CD14-positive monocyte (primary cell): ENCODE measurements at regions of chr19 and their contacts with region 1.

Region 1: DNA sequence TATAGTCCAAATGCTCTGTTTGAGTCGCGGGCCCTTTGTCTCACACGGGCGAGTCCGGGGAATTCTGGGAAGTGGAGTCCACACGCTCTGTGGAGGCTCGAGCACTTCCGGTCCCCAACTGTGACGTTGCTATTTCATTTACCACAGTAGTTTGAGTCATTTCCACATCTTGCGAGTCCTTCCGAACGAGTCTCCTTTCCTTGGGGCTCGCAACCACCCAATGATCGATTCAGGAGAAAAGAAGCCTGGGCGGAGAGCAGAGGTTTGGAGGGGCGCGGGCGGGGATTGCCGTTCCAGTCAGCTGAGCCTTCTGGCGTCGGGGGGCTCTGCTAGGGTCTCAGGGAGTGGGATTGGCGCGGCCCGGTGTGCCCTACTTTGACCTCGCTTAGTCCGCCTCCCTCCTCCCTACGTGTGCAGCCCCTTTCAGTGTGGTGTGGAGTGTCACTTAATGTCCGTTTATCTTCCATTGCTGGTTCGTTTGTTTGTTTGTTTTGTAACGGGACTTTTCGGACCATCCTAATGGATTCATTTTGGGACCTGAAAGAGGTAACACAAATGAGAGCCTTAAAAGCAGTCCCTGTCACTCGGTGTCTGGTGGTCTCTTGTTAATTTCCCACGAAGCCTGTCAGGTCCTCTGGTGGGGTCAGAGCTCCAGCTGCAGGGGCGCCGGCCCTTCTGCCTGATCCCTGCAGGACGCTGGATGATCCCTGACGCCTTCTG is at the start of gene ZNF222:
- DNase-seq: peak; percentile 81 to 91 (median 88)
- H3K4me3 ChIP-seq: peak within 1 kb of the TSS; percentile 77 to 98 (median 78)
- H3K4me3 Mint-ChIP-seq: peak within 1 kb of the TSS; percentile 97 to 98
- H3K27ac ChIP-seq: peak within 1 kb of the TSS; percentile 34 to 88
- H3K27ac Mint-ChIP-seq: peak within 1 kb of the TSS; percentile 80 to 94 (median 85)
- H3K4me1 ChIP-seq: peaks cover 13 to 15% of the 10 kb centered on the region in 2 donors
- H3K4me1 Mint-ChIP-seq: peaks cover 17% of the 10 kb centered on the region
- H3K27me3 ChIP-seq: no peaks in the 10 kb centered on the region
- H3K27me3 Mint-ChIP-seq: peaks cover 1 to 4% (median 2%) of the 10 kb centered on the region in 3 donors
- CTCF ChIP-seq: no peak
- polyA plus RNA-seq, gene ZNF222: 1.0 to 1.5 (median 1.1) TPM

Region 2: GRCh38 chr19:44002566-44003460 is 22.6 kb before region 1 on chr19 and contains the start of gene ZNF230:
- intact Hi-C with region 1: loop called in 1 of 2 experiments (anchors 2 kb)
- DNase-seq: peak; percentile 92 to 97 (median 95)
- H3K4me3 ChIP-seq: peak within 1 kb of the TSS; percentile 82 to 98 (median 92)
- H3K4me3 Mint-ChIP-seq: peak within 1 kb of the TSS; percentile 96 to 99
- H3K27ac ChIP-seq: peak within 1 kb of the TSS; percentile 83 to 86
- H3K27ac Mint-ChIP-seq: peak within 1 kb of the TSS; percentile 93 to 99 (median 96)
- H3K4me1 ChIP-seq: peaks cover 31 to 34% of the 10 kb centered on the region in 2 donors
- H3K4me1 Mint-ChIP-seq: peaks cover 31% of the 10 kb centered on the region
- H3K27me3 ChIP-seq: no peaks in the 10 kb centered on the region
- H3K27me3 Mint-ChIP-seq: peaks cover 0 to 4% (median 2%) of the 10 kb centered on the region in 3 donors
- CTCF ChIP-seq: no peak
- polyA plus RNA-seq, gene ZNF230: 1.0 to 3.9 (median 1.3) TPM